Activated CD4-positive, alpha-beta T cell treated with anti-CD3 and anti-CD28 coated beads for 36 hours (primary cell): ENCODE measurements at regions of chr17 and their contacts with region 1.

Region 1: GRCh38 chr17:74873038-74873873 is 462 bp upstream of the FDXR start:
- DNase-seq: peak; percentile 100
- ATAC-seq: peak; percentile 97
- H3K4me3 Mint-ChIP-seq: peak overlapping the region; percentile 88
- H3K27ac Mint-ChIP-seq: peak overlapping the region; percentile 98
- H3K4me1 Mint-ChIP-seq: peaks cover 22% of the 10 kb centered on the region
- H3K27me3 Mint-ChIP-seq: no peaks in the 10 kb centered on the region

Region 2: DNA sequence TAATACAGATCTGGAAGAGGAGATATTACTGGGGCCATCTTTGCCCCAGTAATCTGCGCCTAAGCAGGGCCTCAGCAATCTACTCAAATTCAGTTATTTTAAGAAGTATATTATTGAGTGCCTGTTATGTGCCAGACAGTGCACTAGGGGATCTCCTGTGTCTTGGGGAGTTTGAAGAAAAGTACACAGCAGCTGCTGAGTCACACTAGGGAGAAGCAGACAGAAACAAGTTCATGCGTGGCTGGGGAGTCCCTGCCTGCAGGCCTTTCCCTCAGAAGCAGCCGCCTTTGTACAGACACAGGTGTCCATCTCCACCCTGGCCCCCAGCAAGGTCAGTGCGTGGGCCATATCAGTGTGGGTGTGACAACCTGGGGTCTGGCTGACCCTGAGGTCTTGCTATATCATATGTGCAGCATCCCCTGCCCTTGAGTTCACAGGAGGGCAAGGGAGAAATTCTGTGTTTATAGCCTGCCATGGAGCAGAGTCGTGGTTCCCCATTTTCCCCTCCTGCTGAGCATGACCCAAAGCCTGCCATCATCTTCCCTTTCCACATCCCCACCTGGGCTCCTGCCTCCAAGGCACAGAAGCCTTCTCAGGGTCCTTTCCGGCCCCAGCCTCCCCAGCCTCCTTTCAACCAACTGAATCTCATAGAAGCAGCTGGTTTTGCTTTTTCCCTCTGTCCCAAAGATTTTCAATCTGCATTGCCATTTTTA is 999.1 kb before region 1 on chr17:
- CTCF ChIA-PET with region 1: no interaction called
- POLR2A ChIA-PET with region 1: no interaction called
- intact Hi-C with region 1: no loop called
- DNase-seq: peak; percentile 38
- ATAC-seq: peak; percentile 93
- H3K4me3 Mint-ChIP-seq: no peak overlapping the region
- H3K27ac Mint-ChIP-seq: no peak overlapping the region
- H3K4me1 Mint-ChIP-seq: no peaks in the 10 kb centered on the region
- H3K27me3 Mint-ChIP-seq: no peaks in the 10 kb centered on the region

Region 3: GRCh38 chr17:74203439-74204240 is 669.6 kb before region 1 on chr17 and contains the start of gene RPL38:
- CTCF ChIA-PET with region 1: no interaction called
- POLR2A ChIA-PET with region 1: no interaction called
- intact Hi-C with region 1: loop called in 1 of 2 experiments (anchors 5 kb)
- DNase-seq: peak; percentile 98
- ATAC-seq: peak; percentile 83
- H3K4me3 Mint-ChIP-seq: peak within 1 kb of the TSS; percentile 100
- H3K27ac Mint-ChIP-seq: peak within 1 kb of the TSS; percentile 100
- H3K4me1 Mint-ChIP-seq: peaks cover 44% of the 10 kb centered on the region
- H3K27me3 Mint-ChIP-seq: peaks cover 11% of the 10 kb centered on the region
- total RNA-seq, gene RPL38: 1,648 to 1,818 TPM

Region 4: DNA sequence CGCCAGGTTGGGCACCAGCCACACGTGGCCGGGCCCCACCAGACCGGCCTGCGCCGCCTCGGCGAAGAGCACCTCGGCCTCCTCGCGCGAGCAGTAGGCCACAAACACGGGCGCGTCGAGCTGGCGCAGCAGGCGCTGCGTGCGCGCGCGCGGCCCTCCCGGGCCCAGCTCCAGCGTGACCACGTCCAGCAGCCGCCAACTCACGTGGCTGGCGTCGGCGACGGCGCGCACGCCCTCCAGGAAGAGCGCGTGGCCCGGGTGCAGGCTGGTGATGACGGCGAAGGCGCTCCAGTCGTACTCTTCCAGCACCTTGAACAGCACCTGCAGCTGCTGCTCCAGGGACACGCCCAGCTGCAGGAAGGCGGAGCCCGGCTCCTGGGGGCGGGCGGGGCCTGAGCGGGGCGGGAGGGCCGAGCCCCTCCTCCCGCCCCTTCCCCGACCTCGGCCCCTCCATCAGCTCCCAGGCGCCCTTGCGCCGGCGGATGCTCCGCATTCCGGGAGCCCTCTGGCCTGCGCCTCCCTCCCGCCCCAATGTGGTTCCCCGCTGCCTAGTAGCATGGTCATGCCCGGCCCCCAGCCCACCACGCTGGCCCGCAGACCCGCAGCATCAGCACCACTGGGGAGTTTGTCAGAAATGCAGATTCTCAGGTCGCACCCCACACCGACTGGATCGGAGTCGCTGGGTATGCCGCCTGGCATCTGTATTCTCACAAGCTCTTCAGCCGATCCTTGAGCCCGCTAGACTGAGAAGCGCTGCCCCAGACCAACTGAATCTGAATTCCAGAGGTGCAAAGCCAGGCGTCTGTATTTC is 20.8 kb before region 1 on chr17:
- CTCF ChIA-PET with region 1: interaction called, 4 read pairs
- POLR2A ChIA-PET with region 1: interaction called, 10 read pairs
- intact Hi-C with region 1: loop called (anchors 1 kb)
- DNase-seq: peak; percentile 83
- ATAC-seq: peak; percentile 91
- H3K4me3 Mint-ChIP-seq: peak overlapping the region; percentile 70
- H3K27ac Mint-ChIP-seq: peak overlapping the region; percentile 35
- H3K4me1 Mint-ChIP-seq: peaks cover 9% of the 10 kb centered on the region
- H3K27me3 Mint-ChIP-seq: peaks cover 27% of the 10 kb centered on the region

Region 5: DNA sequence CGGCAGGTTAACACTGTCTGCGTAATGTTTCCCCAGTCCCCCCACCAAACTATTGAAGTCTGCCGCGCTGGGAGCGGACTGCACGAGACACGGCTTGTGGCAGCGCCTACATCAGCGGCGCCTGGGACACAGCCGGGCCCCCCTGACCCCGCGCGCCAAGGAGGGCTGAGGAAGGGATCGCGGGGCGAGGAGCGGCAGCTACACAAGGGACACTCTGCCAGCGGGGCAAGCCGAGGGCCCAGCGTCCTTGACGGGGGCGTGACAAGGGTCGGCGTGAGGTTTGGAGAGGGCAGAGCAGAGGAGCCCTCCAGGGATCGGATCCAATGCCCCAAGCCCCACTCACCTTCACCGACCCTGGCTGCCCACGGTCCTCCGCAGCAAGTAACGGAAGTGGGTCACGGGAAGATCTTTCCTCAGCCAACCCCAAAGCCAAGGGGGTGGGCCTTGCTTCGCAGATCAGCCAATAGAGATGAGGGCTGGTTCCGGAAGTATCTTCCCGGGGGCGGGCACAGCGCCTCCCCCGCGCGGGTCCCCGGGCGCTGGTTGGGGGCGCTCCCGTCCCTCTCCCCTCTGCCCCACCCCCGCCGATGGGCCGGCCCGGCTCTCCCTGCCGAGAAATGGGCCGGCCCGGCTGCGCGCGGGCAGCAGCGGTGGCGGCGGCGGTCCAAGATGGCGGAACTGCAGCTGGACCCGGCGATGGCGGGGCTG is 173.5 kb after region 1 on chr17 and contains the starts of genes ATP5PD and KCTD2:
- CTCF ChIA-PET with region 1: no interaction called
- POLR2A ChIA-PET with region 1: no interaction called
- intact Hi-C with region 1: loop called in 1 of 2 experiments (anchors 1 kb)
- DNase-seq: peak; percentile 97
- ATAC-seq: peak; percentile 95
- H3K4me3 Mint-ChIP-seq: peak within 1 kb of the TSS; percentile 99
- H3K27ac Mint-ChIP-seq: peak within 1 kb of the TSS; percentile 94
- H3K4me1 Mint-ChIP-seq: peaks cover 37% of the 10 kb centered on the region
- H3K27me3 Mint-ChIP-seq: no peaks in the 10 kb centered on the region
- total RNA-seq, gene ATP5PD: 194 to 237 TPM
- total RNA-seq, gene KCTD2: 15.3 to 16.7 TPM

Region 6: GRCh38 chr17:75289115-75289831 is 416.0 kb after region 1 on chr17 and contains the start of gene SLC25A19:
- CTCF ChIA-PET with region 1: interaction called, 4 read pairs
- POLR2A ChIA-PET with region 1: no interaction called
- intact Hi-C with region 1: loop called in 1 of 2 experiments (anchors 1 kb)
- DNase-seq: peak; percentile 99
- ATAC-seq: peak; percentile 95
- H3K4me3 Mint-ChIP-seq: peak within 1 kb of the TSS; percentile 86
- H3K27ac Mint-ChIP-seq: peak within 1 kb of the TSS; percentile 100
- H3K4me1 Mint-ChIP-seq: peaks cover 28% of the 10 kb centered on the region
- H3K27me3 Mint-ChIP-seq: no peaks in the 10 kb centered on the region
- total RNA-seq, gene SLC25A19: 67.8 to 79.7 TPM

Region 7: DNA sequence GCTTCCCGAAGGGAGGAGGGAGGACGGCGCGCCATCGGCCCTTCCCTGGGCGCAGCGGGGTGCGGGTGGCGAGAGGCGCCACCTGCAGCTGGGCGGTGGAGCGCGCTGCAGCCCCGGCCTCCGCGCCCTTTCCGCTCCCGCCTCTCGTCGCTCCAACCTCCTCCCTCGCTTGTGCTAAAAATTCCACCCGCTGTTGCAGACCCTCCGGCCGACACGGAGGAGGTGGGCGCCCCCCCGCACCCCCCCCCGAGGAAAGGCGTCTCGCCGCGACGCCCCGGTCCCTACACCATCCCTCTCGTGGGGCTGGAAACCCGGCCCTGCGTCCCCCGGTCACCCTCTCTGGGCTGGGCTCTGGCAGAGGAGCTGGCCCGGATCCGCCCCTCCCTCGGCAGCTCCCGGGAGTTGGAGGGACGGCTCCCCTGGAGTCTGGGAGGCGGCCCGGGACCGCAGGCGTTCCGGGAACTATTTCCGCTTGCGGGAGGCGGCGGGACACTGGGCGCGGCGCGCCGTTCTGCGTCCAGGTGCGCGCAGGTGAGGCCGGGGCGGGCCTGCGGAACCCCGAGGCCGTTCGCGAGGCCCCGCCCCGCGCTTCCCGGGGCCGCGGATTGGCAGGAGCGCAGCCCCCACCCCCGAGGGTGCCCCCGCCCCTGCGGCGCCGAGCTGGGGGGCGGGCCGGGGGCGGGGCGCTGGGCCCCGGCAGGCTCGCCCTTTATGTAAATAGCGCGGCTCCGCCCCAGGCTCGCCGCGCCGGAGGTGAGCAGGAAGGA is 651.9 kb after region 1 on chr17 and contains the start of gene LLGL2:
- CTCF ChIA-PET with region 1: no interaction called
- POLR2A ChIA-PET with region 1: no interaction called
- intact Hi-C with region 1: loop called in 1 of 2 experiments (anchors 2 kb)
- DNase-seq: peak; percentile 88
- ATAC-seq: peak; percentile 89
- H3K4me3 Mint-ChIP-seq: peak within 1 kb of the TSS; percentile 62
- H3K27ac Mint-ChIP-seq: no peak within 1 kb of the TSS
- H3K4me1 Mint-ChIP-seq: peaks cover 10% of the 10 kb centered on the region
- H3K27me3 Mint-ChIP-seq: no peaks in the 10 kb centered on the region
- total RNA-seq, gene LLGL2: 7.1 to 9.6 TPM